Mammary epithelial cell (primary cell): ENCODE measurements at regions of chr5 and their contacts with region 1.

Region 1: DNA sequence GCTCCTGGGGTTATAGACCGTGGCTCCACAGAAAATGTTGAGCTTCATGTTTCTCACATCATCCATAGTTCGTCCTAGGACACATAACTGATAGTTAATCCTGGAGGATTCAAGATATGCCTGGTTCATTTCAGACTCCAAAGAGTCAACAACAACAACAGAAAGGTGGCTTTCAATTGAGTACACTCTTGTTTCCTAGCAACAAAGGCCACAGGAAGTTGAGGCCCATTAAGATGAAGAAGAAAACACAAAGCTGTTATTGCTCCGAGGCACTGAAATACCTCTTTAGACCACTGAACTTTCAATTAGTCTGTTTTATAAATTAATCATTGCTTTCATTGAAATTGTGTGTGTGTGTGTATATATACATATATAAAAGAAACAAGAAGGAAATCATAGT is 154.5 kb downstream of the YIPF5 start:
- DNase-seq: no peak
- H3K4me3 ChIP-seq: no peak overlapping the region
- H3K27ac ChIP-seq: no peak overlapping the region
- H3K4me1 ChIP-seq: no peaks in the 10 kb centered on the region
- H3K27me3 ChIP-seq: no peaks in the 10 kb centered on the region
- CTCF ChIP-seq: no peak

Region 2: DNA sequence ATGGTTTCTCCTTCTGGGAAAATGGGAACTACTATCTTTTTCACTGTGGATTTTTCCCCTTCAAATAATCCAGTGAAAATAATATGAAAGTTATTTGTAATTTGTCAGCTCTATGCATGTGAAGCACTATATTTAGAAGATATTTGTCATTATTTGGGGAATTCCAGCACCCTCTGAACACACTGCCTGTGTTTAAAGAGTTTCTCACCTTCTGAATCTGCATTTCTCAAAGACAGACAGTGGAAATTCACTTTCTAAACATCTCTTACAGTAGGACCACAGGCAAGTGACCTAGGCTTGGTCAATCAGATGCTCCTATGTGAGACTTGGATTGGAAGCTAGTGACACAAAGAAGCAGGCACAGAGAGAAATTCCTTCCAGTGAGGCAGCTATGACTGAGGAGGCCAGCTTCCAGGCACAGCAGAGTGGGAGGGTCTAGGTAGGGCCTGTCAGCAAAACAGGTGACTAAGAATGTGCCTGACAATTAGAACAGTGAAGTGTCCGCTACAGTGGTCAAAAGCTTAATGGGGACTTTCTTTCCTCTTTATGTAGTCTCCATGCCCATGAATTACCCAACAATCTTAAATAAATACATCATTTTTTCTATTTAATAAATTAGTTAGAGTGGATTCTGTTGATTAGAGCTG is 36.8 kb before region 1 on chr5:
- CTCF ChIA-PET with region 1: no interaction called
- dilution Hi-C with region 1: no loop called
- in situ Hi-C with region 1: no loop called
- intact Hi-C with region 1: loop called (anchors 1 kb)
- DNase-seq: peak; percentile 32
- H3K4me3 ChIP-seq: no peak overlapping the region
- H3K27ac ChIP-seq: peak overlapping the region; percentile 30
- H3K4me1 ChIP-seq: peaks cover 33% of the 10 kb centered on the region
- H3K27me3 ChIP-seq: no peaks in the 10 kb centered on the region
- CTCF ChIP-seq: no peak